OCI-LY7 (cell line): ENCODE measurements at regions of chr6 and their contacts with region 1.

Region 1: GRCh38 chr6:135054569-135055498 is at the start of gene HBS1L:
- DNase-seq: peak; percentile 99
- H3K4me3 ChIP-seq: peak within 1 kb of the TSS; percentile 93
- H3K27ac ChIP-seq: peak within 1 kb of the TSS; percentile 64
- H3K4me1 ChIP-seq: peaks cover 26% of the 10 kb centered on the region
- CTCF ChIP-seq: no peak
- total RNA-seq, gene HBS1L: 82.9 and 95.4 TPM in 2 replicates

Region 2: GRCh38 chr6:135014353-135014832 is 40.4 kb before region 1 on chr6:
- CTCF ChIA-PET with region 1: no interaction called
- POLR2A ChIA-PET with region 1: no interaction called
- intact Hi-C with region 1: no loop called
- DNase-seq: no peak
- H3K4me3 ChIP-seq: no peak overlapping the region
- H3K27ac ChIP-seq: no peak overlapping the region
- H3K4me1 ChIP-seq: peaks cover 14% of the 10 kb centered on the region
- CTCF ChIP-seq: no peak

Region 3: DNA sequence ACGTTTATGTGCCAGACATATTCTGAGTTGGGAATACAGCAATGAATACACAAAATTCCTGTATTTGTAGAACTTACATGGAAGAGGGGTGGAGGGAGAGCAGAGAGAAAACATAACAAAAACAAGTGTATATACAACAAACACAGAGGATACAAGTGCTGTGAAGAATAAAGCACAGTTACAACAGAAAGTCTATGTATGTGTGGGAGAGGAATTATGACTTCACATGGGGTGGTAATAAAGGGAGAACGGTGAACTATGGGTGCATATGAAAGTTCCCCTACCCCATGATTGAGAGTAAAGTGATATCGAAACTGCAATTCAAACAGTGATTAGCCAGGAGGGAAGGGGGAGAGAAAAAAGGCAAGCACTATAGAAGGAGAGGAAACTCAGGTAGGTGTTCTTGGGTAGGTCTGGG is 24.8 kb before region 1 on chr6:
- CTCF ChIA-PET with region 1: no interaction called
- POLR2A ChIA-PET with region 1: interaction called, 10 read pairs
- intact Hi-C with region 1: no loop called
- DNase-seq: no peak
- H3K4me3 ChIP-seq: no peak overlapping the region
- H3K27ac ChIP-seq: no peak overlapping the region
- H3K4me1 ChIP-seq: no peaks in the 10 kb centered on the region
- CTCF ChIP-seq: no peak

Region 4: DNA sequence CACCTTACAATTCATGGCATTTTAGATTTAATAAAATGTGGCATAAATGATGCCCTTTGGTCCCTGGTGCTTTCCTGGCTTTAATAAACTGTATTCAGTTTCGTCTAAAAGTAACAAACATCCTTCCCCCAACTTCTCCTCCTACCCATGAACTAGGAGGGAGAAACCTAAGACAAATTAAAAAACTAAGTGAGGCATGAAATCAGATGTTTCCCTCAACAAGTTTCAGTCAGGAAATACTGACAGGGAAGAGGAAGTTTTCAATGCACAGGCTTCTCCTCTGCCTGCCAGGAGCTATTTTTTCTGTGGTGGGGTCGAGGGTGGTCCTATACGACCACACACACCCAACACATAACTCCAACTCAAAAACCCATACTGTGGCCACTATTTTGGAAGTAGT is 10.2 kb before region 1 on chr6:
- CTCF ChIA-PET with region 1: no interaction called
- POLR2A ChIA-PET with region 1: interaction called, 23 read pairs
- intact Hi-C with region 1: no loop called
- DNase-seq: peak; percentile 26
- H3K4me3 ChIP-seq: peak overlapping the region; percentile 40
- H3K27ac ChIP-seq: peak overlapping the region; percentile 22
- H3K4me1 ChIP-seq: peaks cover 22% of the 10 kb centered on the region
- CTCF ChIP-seq: no peak

Region 5: GRCh38 chr6:135088818-135089809 is 34.3 kb after region 1 on chr6:
- CTCF ChIA-PET with region 1: no interaction called
- POLR2A ChIA-PET with region 1: interaction called, 17 read pairs
- intact Hi-C with region 1: no loop called
- DNase-seq: peak; percentile 51
- H3K4me3 ChIP-seq: no peak overlapping the region
- H3K27ac ChIP-seq: no peak overlapping the region
- H3K4me1 ChIP-seq: no peaks in the 10 kb centered on the region
- CTCF ChIP-seq: peak; percentile 80

Region 6: GRCh38 chr6:135105710-135106109 is 50.9 kb after region 1 on chr6:
- CTCF ChIA-PET with region 1: interaction called, 5 read pairs
- POLR2A ChIA-PET with region 1: interaction called, 14 read pairs
- intact Hi-C with region 1: no loop called
- DNase-seq: peak; percentile 15
- H3K4me3 ChIP-seq: no peak overlapping the region
- H3K27ac ChIP-seq: no peak overlapping the region
- H3K4me1 ChIP-seq: peaks cover 45% of the 10 kb centered on the region
- CTCF ChIP-seq: no peak

Region 7: GRCh38 chr6:136249811-136250685 is 1195.2 kb after region 1 on chr6 and contains the start of gene MTFR2:
- CTCF ChIA-PET with region 1: no interaction called
- POLR2A ChIA-PET with region 1: no interaction called
- intact Hi-C with region 1: loop called (anchors 5 kb)
- DNase-seq: peak; percentile 99
- H3K4me3 ChIP-seq: peak within 1 kb of the TSS; percentile 92
- H3K27ac ChIP-seq: peak within 1 kb of the TSS; percentile 46
- H3K4me1 ChIP-seq: peaks cover 9% of the 10 kb centered on the region
- CTCF ChIP-seq: no peak
- total RNA-seq, gene MTFR2: 9.3 and 10.4 TPM in 2 replicates